K562 (cell line): ENCODE measurements at regions of chr12 and their contacts with region 1.

Region 1: DNA sequence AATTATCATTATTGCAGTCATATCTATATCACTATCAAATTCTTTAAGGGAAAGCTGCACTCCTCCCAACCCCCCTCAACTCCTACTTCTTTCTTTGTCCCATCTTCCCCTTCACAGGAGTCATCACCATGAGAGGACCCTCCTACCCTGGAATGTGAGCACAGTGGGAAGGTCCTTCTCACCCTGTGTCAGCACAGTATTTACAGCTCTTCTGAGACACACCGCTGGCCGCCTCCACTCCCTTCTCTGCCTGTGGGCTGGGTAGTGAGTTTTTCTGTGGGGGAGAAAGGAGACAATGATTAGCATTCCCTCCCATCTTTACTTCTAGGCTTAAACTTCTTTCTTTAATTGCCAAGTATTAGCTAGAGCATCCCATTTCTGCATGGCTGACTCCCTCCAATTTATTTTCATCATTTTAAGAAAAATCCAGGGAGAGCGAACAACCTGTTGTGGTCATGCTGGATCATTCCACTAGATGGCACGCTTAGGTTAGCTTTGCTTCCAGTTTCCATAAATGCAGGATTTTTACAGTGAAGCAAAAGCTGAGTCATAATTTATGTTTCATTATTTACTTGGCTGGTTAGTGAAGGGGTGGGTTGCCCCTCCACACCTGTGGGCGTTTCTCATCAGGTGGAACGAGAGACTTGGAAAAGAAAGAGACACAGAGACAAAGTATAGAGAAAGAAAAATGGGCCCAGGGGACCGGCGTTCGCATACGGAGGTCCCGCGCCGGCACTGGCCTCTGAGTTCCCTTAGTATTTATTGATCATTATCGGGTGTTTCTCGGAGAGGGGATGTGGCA is 188.5 kb downstream of the ALX1 start:
- DNase-seq: peak in 3 of 4 experiments; percentile 5 to 14 (median 9)
- ATAC-seq: no peak
- H3K4me3 ChIP-seq: no peak overlapping the region
- H3K27ac ChIP-seq: no peak overlapping the region
- H3K4me1 ChIP-seq: no peaks in the 10 kb centered on the region
- H3K27me3 ChIP-seq: no peaks in the 10 kb centered on the region
- CTCF ChIP-seq: peak in 2 of 3 experiments; percentile 29 to 34; a peak in 2 of 6 replicates
- EP300 ChIP-seq: no peak
- POLR2A ChIP-seq: no peak
- RAD21 ChIP-seq: peak; percentile 39 to 58

Region 2: GRCh38 chr12:85872497-85873091 is 404.0 kb after region 1 on chr12:
- CTCF ChIA-PET with region 1: no interaction called
- POLR2A ChIA-PET with region 1: no interaction called
- in situ Hi-C with region 1: no loop called
- intact Hi-C with region 1: loop called (anchors 10 kb)
- DNase-seq: peak in 2 of 4 experiments; percentile 2 to 46
- ATAC-seq: no peak
- H3K4me3 ChIP-seq: no peak overlapping the region
- H3K27ac ChIP-seq: no peak overlapping the region
- H3K4me1 ChIP-seq: no peaks in the 10 kb centered on the region
- H3K27me3 ChIP-seq: no peaks in the 10 kb centered on the region
- CTCF ChIP-seq: peak in 2 of 3 experiments; percentile 50 to 56; a peak in 4 of 6 replicates
- EP300 ChIP-seq: no peak
- POLR2A ChIP-seq: no peak
- RAD21 ChIP-seq: peak; percentile 21 to 57; a peak in 2 of 4 replicates